ENCODE measurements at regions of chr20 and their contacts with region 1.

Region 1: DNA sequence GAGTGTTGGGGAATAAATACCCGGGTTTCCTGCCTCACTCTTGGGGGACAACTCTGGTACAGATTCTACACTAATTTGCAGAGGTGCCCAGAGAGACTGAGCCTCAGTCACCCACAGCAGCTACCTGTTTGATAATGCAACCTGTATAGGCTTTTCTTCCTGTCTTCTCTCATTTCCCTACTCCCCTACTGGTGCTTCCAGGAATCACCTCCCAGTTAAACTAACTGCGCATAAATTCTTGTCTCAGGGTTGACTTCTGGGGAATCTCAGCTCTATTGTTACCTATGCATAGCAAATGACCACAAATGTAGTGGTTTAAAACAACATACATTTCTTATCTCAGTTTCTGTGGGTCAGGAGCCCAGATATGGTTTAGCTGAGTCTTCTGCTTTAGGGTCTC is 11.3 kb downstream of the OCSTAMP start:
- DNase-seq: no peak
- ATAC-seq: no peak
- H3K4me3 ChIP-seq: no peak overlapping the region
- H3K27ac ChIP-seq: no peak overlapping the region
- H3K4me1 ChIP-seq: no peaks in the 10 kb centered on the region
- H3K27me3 ChIP-seq: peaks cover 0 to 68% (median 58%) of the 10 kb centered on the region in 7 donors
- CTCF ChIP-seq: no peak

Region 2: GRCh38 chr20:46651091-46651962 is 112.2 kb after region 1 on chr20 and contains the start of gene SLC13A3:
- intact Hi-C with region 1: loop called in 1 of 10 experiments (anchors 10 kb)
- DNase-seq: no peak
- ATAC-seq: peak in 4 of 8 donors; percentile 23 to 67 (median 54)
- H3K4me3 ChIP-seq: peak within 1 kb of the TSS in 9 of 10 donors; percentile 16 to 42 (median 28)
- H3K27ac ChIP-seq: no peak within 1 kb of the TSS
- H3K4me1 ChIP-seq: no peaks in the 10 kb centered on the region
- H3K27me3 ChIP-seq: peaks cover 4 to 45% (median 30%) of the 10 kb centered on the region in 7 donors
- CTCF ChIP-seq: no peak
- total RNA-seq, gene SLC13A3: 0.13 to 1.2 (median 0.60) TPM

Measured in heart right ventricle (tissue), 16 donors.